CD8-positive, alpha-beta memory T cell (primary cell): ENCODE measurements at regions of chr10 and their contacts with region 1.

Region 1: GRCh38 chr10:103772096-103772845 is 83.1 kb downstream of the SH3PXD2A start:
- DNase-seq: peak; percentile 38 to 67 (median 54)
- H3K4me3 ChIP-seq: peak overlapping the region; percentile 82
- H3K4me3 Mint-ChIP-seq: peak overlapping the region; percentile 86 to 95 (median 93)
- H3K27ac ChIP-seq: peak overlapping the region; percentile 57
- H3K27ac Mint-ChIP-seq: peak overlapping the region; percentile 32 to 97 (median 92)
- H3K4me1 ChIP-seq: peaks cover 15% of the 10 kb centered on the region
- H3K4me1 Mint-ChIP-seq: peaks cover 14 to 26% (median 24%) of the 10 kb centered on the region in 3 donors
- H3K27me3 ChIP-seq: no peaks in the 10 kb centered on the region
- H3K27me3 Mint-ChIP-seq: peaks cover 0 to 1% of the 10 kb centered on the region in 2 donors

Region 2: DNA sequence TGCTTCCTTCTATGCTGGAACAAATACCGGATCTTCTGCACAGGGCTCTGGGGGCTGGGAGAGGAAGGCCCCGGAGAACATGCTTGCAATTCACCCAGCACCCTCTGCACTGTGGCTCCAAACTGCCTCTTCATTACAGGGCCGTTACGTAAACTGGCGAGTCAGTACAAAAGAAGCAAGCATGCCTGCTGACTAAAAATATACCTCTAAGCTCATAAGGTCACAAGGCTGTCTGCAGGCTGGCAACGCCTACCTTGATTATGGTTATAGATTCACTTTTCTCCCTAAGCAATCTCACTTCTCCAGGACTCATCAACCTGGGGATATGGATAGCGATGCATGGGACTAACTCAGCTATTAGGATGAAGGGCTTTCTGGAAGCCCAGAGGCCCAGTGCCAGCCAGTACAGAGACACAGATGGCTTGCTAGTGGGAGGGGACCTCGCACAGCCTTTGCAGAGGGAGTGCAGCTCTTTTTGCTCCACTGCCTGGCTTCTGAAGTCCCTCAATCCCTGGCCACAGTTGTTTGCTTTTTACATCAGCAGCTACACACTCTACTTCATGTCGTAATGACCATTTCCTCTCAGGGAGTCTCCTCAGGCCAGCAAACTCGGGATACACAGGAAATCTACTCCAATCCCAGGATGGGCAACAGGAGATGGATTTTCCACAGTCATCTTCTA is 13.0 kb before region 1 on chr10:
- CTCF ChIA-PET with region 1: interaction called, 15 read pairs
- POLR2A ChIA-PET with region 1: interaction called, 5 read pairs
- DNase-seq: no peak
- H3K4me3 ChIP-seq: no peak overlapping the region
- H3K4me3 Mint-ChIP-seq: peak overlapping the region in 1 of 7 donors; percentile 9
- H3K27ac ChIP-seq: no peak overlapping the region
- H3K27ac Mint-ChIP-seq: peak overlapping the region in 6 of 8 donors; percentile 53 to 84 (median 78)
- H3K4me1 ChIP-seq: peaks cover 46% of the 10 kb centered on the region
- H3K4me1 Mint-ChIP-seq: peaks cover 38 to 46% (median 45%) of the 10 kb centered on the region in 3 donors
- H3K27me3 ChIP-seq: no peaks in the 10 kb centered on the region
- H3K27me3 Mint-ChIP-seq: no peaks in the 10 kb centered on the region